Heart right ventricle (tissue), 16 donors: ENCODE measurements at regions of chr12 and their contacts with region 1.

Region 1: GRCh38 chr12:95582230-95583058 is 31.2 kb upstream of the USP44 start:
- DNase-seq: no peak
- ATAC-seq: peak in 7 of 8 donors; percentile 61 to 91 (median 73)
- H3K4me3 ChIP-seq: no peak overlapping the region
- H3K27ac ChIP-seq: no peak overlapping the region
- H3K4me1 ChIP-seq: peaks cover 0 to 5% (median 0%) of the 10 kb centered on the region in 9 donors
- H3K27me3 ChIP-seq: no peaks in the 10 kb centered on the region
- CTCF ChIP-seq: peak; percentile 36 to 79 (median 69)

Region 2: DNA sequence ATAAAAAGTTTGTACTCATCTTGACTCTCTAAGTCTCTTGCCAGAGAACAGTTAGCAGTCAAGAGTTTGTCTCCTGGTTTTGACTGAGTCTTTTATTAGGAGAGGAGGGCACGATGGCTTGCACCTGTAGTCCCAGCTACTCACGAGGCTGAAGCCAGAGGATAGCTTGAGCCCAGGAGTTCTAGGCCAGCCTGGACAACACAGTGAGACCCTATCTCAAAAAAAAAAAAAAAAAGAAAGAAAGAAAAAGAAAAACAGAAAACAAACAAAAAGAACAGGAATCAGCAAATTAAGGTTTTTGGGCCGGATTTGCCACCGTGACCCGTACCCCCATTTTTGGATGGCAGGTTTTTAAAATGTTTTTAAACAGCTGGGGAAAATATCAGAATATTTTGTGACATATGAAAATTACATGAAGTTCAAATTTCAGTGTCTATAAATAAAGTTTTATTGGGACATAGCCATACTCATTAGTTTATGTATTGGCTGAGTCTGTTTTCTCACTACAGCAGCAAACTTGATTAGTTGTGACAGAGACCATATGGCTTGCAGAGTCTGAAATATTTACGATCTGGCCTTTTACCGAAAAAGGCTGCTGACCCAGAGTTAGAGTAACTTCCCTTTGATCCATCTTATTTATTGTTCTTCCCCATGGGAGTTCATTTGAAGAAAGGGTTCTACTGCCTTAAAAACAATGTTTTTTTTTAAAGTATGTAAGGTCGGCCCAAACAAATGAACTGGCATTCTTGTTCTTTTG is 333.7 kb before region 1 on chr12:
- intact Hi-C with region 1: no loop called
- DNase-seq: no peak
- ATAC-seq: no peak
- H3K4me3 ChIP-seq: no peak overlapping the region
- H3K27ac ChIP-seq: no peak overlapping the region
- H3K4me1 ChIP-seq: peaks cover 0 to 49% (median 21%) of the 10 kb centered on the region in 9 donors
- H3K27me3 ChIP-seq: no peaks in the 10 kb centered on the region
- CTCF ChIP-seq: no peak

Region 3: DNA sequence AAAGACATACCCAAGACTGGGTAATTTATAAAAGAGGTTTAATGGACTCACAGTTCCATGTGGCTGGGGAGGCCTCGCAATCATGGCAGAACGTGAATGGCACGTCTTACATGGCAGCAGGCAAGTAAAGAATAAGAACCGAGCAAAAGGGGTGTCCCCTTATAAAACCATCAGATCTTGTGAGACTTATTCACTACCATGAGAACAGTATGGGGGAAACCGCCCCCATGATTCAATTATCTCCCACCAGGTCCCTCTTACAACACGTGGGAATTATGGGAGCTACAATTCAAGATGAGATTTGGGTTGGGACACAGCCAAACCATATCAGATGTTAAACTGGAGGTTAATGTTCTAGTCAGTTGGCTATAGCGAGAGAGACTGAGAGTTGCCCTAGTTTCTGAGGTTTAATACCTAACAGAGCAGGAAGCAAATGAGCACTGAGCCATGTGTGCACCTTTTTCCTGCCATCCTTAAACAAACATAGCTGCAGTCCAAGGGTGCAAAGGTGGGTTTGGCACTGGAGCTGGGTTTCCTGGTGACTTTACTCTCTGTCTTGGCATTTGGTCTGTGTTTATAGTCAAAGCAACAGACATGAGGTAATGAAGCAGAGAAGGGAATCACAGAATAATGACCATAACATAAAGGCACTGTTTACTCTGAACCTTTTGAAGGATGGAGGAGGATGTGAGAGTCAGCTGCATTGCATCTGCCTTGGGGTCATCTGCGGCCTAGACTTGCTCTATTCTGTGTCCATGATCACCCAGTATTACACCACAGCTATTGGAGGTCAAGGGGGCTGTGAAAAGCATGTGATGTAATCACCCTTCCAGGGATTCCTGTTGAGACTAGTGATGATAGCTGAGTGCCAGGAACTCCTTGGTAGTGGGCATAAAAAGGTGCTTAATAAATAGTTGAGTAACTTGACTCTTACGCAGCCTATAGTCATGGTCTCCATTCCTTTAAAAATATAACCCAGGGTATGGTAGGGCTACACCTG is 52.5 kb after region 1 on chr12:
- intact Hi-C with region 1: no loop called
- DNase-seq: no peak
- ATAC-seq: no peak
- H3K4me3 ChIP-seq: no peak overlapping the region
- H3K27ac ChIP-seq: peak overlapping the region in 3 of 10 donors; percentile 59 to 73 (median 71)
- H3K4me1 ChIP-seq: peaks cover 0 to 46% (median 18%) of the 10 kb centered on the region in 9 donors
- H3K27me3 ChIP-seq: no peaks in the 10 kb centered on the region
- CTCF ChIP-seq: no peak

Region 4: GRCh38 chr12:95663525-95663924 is 81.1 kb after region 1 on chr12:
- intact Hi-C with region 1: no loop called
- DNase-seq: no peak
- ATAC-seq: peak in 4 of 8 donors; percentile 25 to 60 (median 38)
- H3K4me3 ChIP-seq: no peak overlapping the region
- H3K27ac ChIP-seq: peak overlapping the region in 9 of 10 donors; percentile 6 to 71 (median 50)
- H3K4me1 ChIP-seq: peaks cover 0 to 35% (median 11%) of the 10 kb centered on the region in 9 donors
- H3K27me3 ChIP-seq: no peaks in the 10 kb centered on the region
- CTCF ChIP-seq: no peak

Region 5: GRCh38 chr12:95810411-95810810 is 228.0 kb after region 1 on chr12:
- intact Hi-C with region 1: loop called in 9 of 10 experiments (anchors 1 to 5 kb)
- DNase-seq: no peak
- ATAC-seq: no peak
- H3K4me3 ChIP-seq: no peak overlapping the region
- H3K27ac ChIP-seq: no peak overlapping the region
- H3K4me1 ChIP-seq: peaks cover 0 to 3% (median 0%) of the 10 kb centered on the region in 9 donors
- H3K27me3 ChIP-seq: no peaks in the 10 kb centered on the region
- CTCF ChIP-seq: no peak

Region 6: DNA sequence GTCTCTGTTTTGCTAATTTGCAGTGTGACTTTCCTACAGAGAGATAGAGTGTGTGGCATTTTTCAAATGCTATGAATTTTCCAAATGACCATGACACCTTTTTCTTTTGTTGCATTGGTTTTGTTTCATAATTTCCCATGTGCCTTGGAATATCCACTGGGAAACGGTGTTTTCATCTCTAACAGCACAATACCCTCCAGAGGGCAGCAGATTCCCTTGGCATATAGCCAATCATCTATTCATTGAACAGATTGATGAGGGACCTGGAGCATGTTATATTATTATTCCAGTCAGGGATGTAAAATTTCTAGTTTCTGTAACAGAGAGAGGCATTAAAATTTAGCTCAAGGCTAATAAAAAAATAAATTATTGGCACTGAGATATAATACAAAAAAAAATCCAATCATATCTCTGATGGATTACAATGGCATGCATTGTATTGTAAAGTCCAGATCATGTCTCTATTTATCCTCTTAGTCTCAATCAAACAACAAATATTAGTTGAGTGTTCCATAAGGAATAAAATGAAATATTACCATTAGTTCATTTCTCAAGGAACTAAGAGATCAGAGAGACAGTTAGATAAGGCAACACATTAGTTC is 237.8 kb after region 1 on chr12:
- intact Hi-C with region 1: loop called in 9 of 10 experiments (anchors 1 to 5 kb)
- DNase-seq: peak in 1 of 2 donors; percentile 36
- ATAC-seq: peak in 2 of 8 donors; percentile 29 to 56
- H3K4me3 ChIP-seq: no peak overlapping the region
- H3K27ac ChIP-seq: no peak overlapping the region
- H3K4me1 ChIP-seq: peaks cover 0 to 5% (median 0%) of the 10 kb centered on the region in 9 donors
- H3K27me3 ChIP-seq: no peaks in the 10 kb centered on the region
- CTCF ChIP-seq: peak; percentile 20 to 68 (median 57)